Prostate gland (tissue), 2 donors: ENCODE measurements at regions of chr3 and their contacts with region 1.

Region 1: GRCh38 chr3:186108941-186109865 is at the start of gene ETV5:
- DNase-seq: peak; percentile 99
- H3K4me3 ChIP-seq: peak within 1 kb of the TSS; percentile 46 to 58
- H3K27ac ChIP-seq: peak within 1 kb of the TSS; percentile 72 to 82
- H3K4me1 ChIP-seq: no peaks in the 10 kb centered on the region
- H3K27me3 ChIP-seq: no peaks in the 10 kb centered on the region
- CTCF ChIP-seq: peak in 1 of 4 experiments; percentile 8
- POLR2A ChIP-seq: peak; percentile 64
- total RNA-seq, gene ETV5: 16.5 to 17.6 TPM

Region 2: GRCh38 chr3:185937689-185938463 is 171.3 kb before region 1 on chr3 and contains the start of gene TRA2B:
- intact Hi-C with region 1: loop called (anchors 5 kb)
- DNase-seq: peak; percentile 99
- H3K4me3 ChIP-seq: peak within 1 kb of the TSS; percentile 88 to 100
- H3K27ac ChIP-seq: peak within 1 kb of the TSS; percentile 100
- H3K4me1 ChIP-seq: no peaks in the 10 kb centered on the region
- H3K27me3 ChIP-seq: no peaks in the 10 kb centered on the region
- CTCF ChIP-seq: peak in 1 of 4 experiments; percentile 34
- POLR2A ChIP-seq: peak; percentile 100
- total RNA-seq, gene TRA2B: 132 to 137 TPM

Region 3: GRCh38 chr3:186217820-186218164 is 108.6 kb after region 1 on chr3:
- intact Hi-C with region 1: loop called (anchors 5 kb)
- DNase-seq: no peak
- H3K4me3 ChIP-seq: no peak overlapping the region
- H3K27ac ChIP-seq: no peak overlapping the region
- H3K4me1 ChIP-seq: no peaks in the 10 kb centered on the region
- H3K27me3 ChIP-seq: no peaks in the 10 kb centered on the region
- CTCF ChIP-seq: no peak
- POLR2A ChIP-seq: no peak